ENCODE measurements at regions of chr22 and their contacts with region 1.

Region 1: GRCh38 chr22:41381329-41382097 is at the start of gene TEF:
- DNase-seq: peak; percentile 95
- ATAC-seq: peak; percentile 84
- H3K4me3 Mint-ChIP-seq: peak within 1 kb of the TSS; percentile 91
- H3K27ac Mint-ChIP-seq: peak within 1 kb of the TSS; percentile 98
- H3K4me1 Mint-ChIP-seq: peaks cover 24% of the 10 kb centered on the region
- H3K27me3 Mint-ChIP-seq: no peaks in the 10 kb centered on the region
- CTCF ChIP-seq: no peak
- total RNA-seq, gene TEF: 5.1 and 5.2 TPM in 2 replicates

Region 2: DNA sequence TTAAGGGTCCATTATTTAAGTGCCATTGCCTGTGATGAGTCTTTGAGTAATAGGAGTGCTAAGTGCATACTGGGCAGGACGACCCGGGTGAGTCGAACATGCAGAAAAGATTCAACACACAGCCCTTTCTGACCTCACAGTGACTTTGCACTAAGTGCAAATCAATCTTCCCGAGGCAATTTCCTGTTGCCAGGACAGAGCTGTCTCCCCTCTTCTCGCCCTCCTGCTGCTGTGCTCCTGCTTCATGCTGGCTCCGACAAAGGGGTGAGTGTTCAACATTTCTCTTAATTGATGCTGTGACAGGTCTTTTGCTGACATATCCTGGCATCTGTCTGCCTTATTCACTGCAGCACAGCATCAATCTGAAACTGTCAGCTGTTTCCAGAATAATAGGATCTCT is 660.2 kb before region 1 on chr22:
- CTCF ChIA-PET with region 1: no interaction called
- POLR2A ChIA-PET with region 1: no interaction called
- intact Hi-C with region 1: no loop called
- DNase-seq: no peak
- ATAC-seq: no peak
- H3K4me3 Mint-ChIP-seq: no peak overlapping the region
- H3K27ac Mint-ChIP-seq: no peak overlapping the region
- H3K4me1 Mint-ChIP-seq: peaks cover 3% of the 10 kb centered on the region
- H3K27me3 Mint-ChIP-seq: peaks cover 12% of the 10 kb centered on the region
- CTCF ChIP-seq: no peak

Region 3: GRCh38 chr22:40856513-40857308 is 524.8 kb before region 1 on chr22 and contains the starts of genes ST13 and XPNPEP3:
- CTCF ChIA-PET with region 1: no interaction called
- POLR2A ChIA-PET with region 1: interaction called, 3 read pairs
- intact Hi-C with region 1: loop called (anchors 2 kb)
- DNase-seq: peak; percentile 96
- ATAC-seq: peak; percentile 90
- H3K4me3 Mint-ChIP-seq: peak within 1 kb of the TSS; percentile 98
- H3K27ac Mint-ChIP-seq: peak within 1 kb of the TSS; percentile 100
- H3K4me1 Mint-ChIP-seq: peaks cover 47% of the 10 kb centered on the region
- H3K27me3 Mint-ChIP-seq: no peaks in the 10 kb centered on the region
- CTCF ChIP-seq: no peak
- total RNA-seq, gene ST13: 183 and 221 TPM in 2 replicates
- total RNA-seq, gene XPNPEP3: 20.3 and 20.8 TPM in 2 replicates

Region 4: GRCh38 chr22:41285820-41286638 is 95.5 kb before region 1 on chr22 and contains the start of gene RANGAP1:
- CTCF ChIA-PET with region 1: interaction called, 3 read pairs
- POLR2A ChIA-PET with region 1: interaction called, 34 read pairs
- intact Hi-C with region 1: loop called (anchors 1 kb)
- DNase-seq: peak; percentile 93
- ATAC-seq: peak; percentile 97
- H3K4me3 Mint-ChIP-seq: peak within 1 kb of the TSS; percentile 94
- H3K27ac Mint-ChIP-seq: peak within 1 kb of the TSS; percentile 98
- H3K4me1 Mint-ChIP-seq: peaks cover 28% of the 10 kb centered on the region
- H3K27me3 Mint-ChIP-seq: no peaks in the 10 kb centered on the region
- CTCF ChIP-seq: no peak
- total RNA-seq, gene RANGAP1: 48.9 and 56.4 TPM in 2 replicates

Region 5: GRCh38 chr22:41479671-41480396 is 98.3 kb after region 1 on chr22:
- CTCF ChIA-PET with region 1: no interaction called
- POLR2A ChIA-PET with region 1: interaction called, 18 read pairs
- intact Hi-C with region 1: no loop called
- DNase-seq: no peak
- ATAC-seq: no peak
- H3K4me3 Mint-ChIP-seq: peak overlapping the region; percentile 79
- H3K27ac Mint-ChIP-seq: peak overlapping the region; percentile 96
- H3K4me1 Mint-ChIP-seq: peaks cover 87% of the 10 kb centered on the region
- H3K27me3 Mint-ChIP-seq: no peaks in the 10 kb centered on the region
- CTCF ChIP-seq: no peak

Region 6: DNA sequence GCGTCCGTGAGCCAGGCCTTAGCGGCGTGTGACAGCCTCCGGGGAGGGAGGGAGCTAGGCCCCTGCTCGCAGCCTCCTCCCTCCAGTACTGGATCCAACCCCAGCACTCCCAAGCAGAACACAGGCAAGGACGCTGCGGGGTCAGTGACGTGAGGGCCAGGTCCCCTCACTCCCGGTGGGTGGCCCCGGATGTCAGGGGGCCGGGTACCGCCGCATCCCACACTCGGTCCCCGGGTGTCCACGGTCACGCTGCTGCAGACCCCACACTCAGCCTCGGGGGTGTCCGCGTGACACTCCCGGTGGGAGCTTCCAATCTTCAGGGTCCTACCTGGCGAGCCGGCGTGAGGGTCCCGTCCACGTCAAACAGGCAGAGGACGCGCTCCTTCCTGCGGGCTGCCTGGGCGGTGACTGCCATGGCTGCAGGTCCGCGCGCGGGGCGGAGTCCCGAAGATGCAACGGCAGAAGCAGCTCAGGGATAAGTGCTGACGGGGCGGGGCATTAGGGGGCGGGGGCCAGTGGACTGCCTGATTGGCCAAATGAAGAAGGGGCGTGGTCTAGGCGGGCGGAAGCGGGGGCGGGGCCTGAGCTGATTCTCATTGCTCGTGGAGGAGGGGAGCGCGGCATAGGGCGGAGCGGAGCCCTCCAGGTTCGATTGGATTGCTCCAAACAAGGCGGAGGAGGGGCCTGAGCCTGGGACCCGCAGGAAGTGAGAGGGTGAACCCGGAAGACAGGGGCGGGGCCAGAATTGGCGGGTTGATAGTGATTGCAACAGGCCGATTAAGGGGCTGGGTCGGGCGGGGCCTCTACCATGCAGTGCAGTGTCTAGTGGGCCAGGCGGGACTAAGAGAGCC is 208.1 kb after region 1 on chr22 and contains the start of gene PMM1:
- CTCF ChIA-PET with region 1: no interaction called
- POLR2A ChIA-PET with region 1: interaction called, 14 read pairs
- intact Hi-C with region 1: loop called (anchors 1 kb)
- DNase-seq: peak; percentile 98
- ATAC-seq: peak; percentile 98
- H3K4me3 Mint-ChIP-seq: peak within 1 kb of the TSS; percentile 91
- H3K27ac Mint-ChIP-seq: peak within 1 kb of the TSS; percentile 88
- H3K4me1 Mint-ChIP-seq: peaks cover 12% of the 10 kb centered on the region
- H3K27me3 Mint-ChIP-seq: no peaks in the 10 kb centered on the region
- CTCF ChIP-seq: no peak
- total RNA-seq, gene PMM1: 13.0 and 15.1 TPM in 2 replicates

Region 7: GRCh38 chr22:41998361-41999275 is 617.1 kb after region 1 on chr22 and contains the start of gene WBP2NL:
- CTCF ChIA-PET with region 1: no interaction called
- POLR2A ChIA-PET with region 1: no interaction called
- intact Hi-C with region 1: loop called (anchors 2 kb)
- DNase-seq: peak; percentile 83
- ATAC-seq: peak; percentile 96
- H3K4me3 Mint-ChIP-seq: peak within 1 kb of the TSS; percentile 98
- H3K27ac Mint-ChIP-seq: peak within 1 kb of the TSS; percentile 98
- H3K4me1 Mint-ChIP-seq: peaks cover 22% of the 10 kb centered on the region
- H3K27me3 Mint-ChIP-seq: no peaks in the 10 kb centered on the region
- CTCF ChIP-seq: no peak
- total RNA-seq, gene WBP2NL: 6.8 and 7.8 TPM in 2 replicates

Measured in activated B cell treated with CpG ODN at 0.5 μM for 24 hours (primary cell).